ENCODE measurements at regions of chr12 and their contacts with region 1.

Region 1: DNA sequence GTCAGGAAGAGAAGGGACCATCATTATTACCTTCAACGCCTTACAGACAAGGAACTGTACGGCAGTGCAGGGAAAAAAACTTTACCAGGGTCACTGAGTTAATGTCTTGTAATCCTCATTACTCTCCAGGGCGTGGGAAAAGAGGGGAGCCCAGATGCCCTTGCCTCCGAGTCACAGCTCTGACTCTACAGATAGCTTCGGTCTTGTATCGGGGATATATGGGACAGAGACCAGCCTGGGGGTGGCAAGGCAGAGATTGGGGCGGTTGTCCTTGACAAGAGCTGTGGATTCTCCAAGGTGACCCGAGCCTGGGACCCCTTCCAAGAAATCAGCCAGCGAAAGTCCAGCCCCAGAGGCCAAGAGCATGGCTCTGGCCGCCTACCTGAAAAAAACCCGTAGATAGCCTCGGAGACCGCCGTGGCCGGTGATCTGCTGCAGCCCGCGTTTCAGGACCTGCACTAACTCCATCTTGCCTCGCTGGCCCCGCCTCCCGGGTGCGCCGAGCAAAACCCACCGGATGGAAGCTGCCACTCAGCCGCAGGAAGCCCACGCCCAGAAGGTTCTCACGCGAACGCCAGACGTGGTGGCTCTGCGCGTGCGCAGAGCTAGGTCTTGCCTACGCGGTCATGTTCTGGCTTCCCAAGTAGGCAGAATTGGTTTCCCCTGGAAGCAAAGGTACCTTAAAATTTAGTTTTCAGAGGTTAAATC is at the start of gene NDUFA12:
- DNase-seq: peak; percentile 94
- H3K4me3 ChIP-seq: peak within 1 kb of the TSS; percentile 58 to 85 (median 84)
- H3K27ac ChIP-seq: peak within 1 kb of the TSS; percentile 86
- H3K4me1 ChIP-seq: no peaks in the 10 kb centered on the region
- H3K27me3 ChIP-seq: no peaks in the 10 kb centered on the region
- CTCF ChIP-seq: no peak
- total RNA-seq, gene NDUFA12: 64.0 to 115 TPM

Region 2: DNA sequence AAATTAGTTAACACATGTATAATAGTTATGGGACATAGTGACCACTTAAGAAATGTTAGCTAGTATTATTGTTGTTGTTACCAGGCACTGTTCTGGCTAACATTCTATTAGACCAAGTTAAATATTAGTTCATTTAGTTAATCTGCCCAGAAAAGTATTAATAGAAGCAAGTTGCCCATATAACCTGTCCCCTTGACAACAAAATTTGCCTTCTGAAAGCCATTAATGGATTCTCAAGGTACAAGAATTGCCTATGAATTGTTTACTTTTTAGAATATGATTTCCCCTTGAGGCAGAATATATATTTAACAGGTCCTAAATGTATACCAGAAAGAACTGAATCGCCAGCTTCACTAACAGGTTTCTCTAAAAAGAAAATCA is 185.7 kb before region 1 on chr12:
- CTCF ChIA-PET with region 1: no interaction called
- dilution Hi-C with region 1: no loop called
- in situ Hi-C with region 1: no loop called
- intact Hi-C with region 1: no loop called
- DNase-seq: no peak
- H3K4me3 ChIP-seq: no peak overlapping the region
- H3K27ac ChIP-seq: no peak overlapping the region
- H3K4me1 ChIP-seq: no peaks in the 10 kb centered on the region
- H3K27me3 ChIP-seq: no peaks in the 10 kb centered on the region
- CTCF ChIP-seq: no peak

Region 3: DNA sequence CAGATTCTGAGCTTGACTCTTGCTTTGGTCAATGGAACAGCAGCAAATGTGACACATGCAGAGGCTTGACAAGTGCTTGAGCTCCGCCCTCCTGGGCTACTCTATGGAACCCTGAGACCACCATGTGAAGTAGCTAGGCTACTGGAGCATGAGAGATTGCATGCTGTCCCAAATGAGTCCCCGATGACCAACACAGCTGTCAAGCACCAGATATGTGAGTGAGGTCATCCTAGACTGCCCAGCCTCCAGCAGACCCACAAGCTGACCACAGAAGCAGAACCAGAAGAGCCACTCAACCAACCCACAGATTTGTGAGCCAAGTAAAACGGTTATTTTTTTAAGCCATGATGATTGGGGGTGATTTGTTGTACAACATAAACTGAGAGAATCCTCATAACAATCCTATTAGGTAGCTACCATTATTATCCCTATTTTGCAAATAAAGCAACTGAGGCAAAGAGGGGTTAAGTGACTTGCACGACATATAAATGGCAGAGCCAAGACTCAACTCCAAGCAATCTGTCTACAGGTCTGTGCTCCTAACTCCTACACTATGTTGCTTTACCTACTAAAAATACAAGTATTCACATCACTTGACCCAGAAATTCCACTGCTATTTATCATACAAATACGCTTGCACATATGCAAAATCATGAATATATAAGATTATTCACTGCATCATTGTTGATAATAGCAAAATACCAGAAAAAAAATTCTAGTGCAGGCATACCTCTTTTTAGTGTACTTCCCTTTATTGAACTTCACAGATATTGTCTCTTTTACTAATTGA is 136.1 kb before region 1 on chr12:
- CTCF ChIA-PET with region 1: no interaction called
- dilution Hi-C with region 1: no loop called
- in situ Hi-C with region 1: no loop called
- intact Hi-C with region 1: no loop called
- DNase-seq: no peak
- H3K4me3 ChIP-seq: no peak overlapping the region
- H3K27ac ChIP-seq: no peak overlapping the region
- H3K4me1 ChIP-seq: no peaks in the 10 kb centered on the region
- H3K27me3 ChIP-seq: peaks cover 3% of the 10 kb centered on the region
- CTCF ChIP-seq: no peak

Region 4: GRCh38 chr12:94941440-94941862 is 61.9 kb before region 1 on chr12:
- CTCF ChIA-PET with region 1: no interaction called
- dilution Hi-C with region 1: no loop called
- in situ Hi-C with region 1: no loop called
- intact Hi-C with region 1: loop called (anchors 5 kb)
- DNase-seq: peak; percentile 93
- H3K4me3 ChIP-seq: no peak overlapping the region
- H3K27ac ChIP-seq: peak overlapping the region; percentile 39
- H3K4me1 ChIP-seq: peaks cover 12% of the 10 kb centered on the region
- H3K27me3 ChIP-seq: no peaks in the 10 kb centered on the region
- CTCF ChIP-seq: no peak

Region 5: DNA sequence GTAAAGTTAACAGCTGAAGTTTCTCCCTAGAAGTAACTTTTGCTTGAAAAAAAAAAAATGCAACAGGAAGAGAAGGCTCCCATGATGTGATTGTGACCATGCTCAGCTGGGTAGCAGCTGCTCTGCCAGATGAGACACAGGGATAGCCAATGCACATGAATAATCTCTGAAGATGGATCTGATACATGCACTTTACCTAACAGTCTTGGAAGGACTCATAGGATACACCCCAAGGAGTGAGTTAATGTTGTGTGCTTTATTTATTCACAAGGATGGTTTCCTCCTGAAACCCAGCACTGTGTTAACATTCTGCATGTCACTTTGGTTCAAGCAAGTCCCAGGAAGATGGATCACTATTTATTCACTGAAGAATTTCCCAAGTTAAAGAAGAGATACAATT is 46.4 kb before region 1 on chr12:
- CTCF ChIA-PET with region 1: no interaction called
- dilution Hi-C with region 1: no loop called
- in situ Hi-C with region 1: no loop called
- intact Hi-C with region 1: no loop called
- DNase-seq: no peak
- H3K4me3 ChIP-seq: no peak overlapping the region
- H3K27ac ChIP-seq: no peak overlapping the region
- H3K4me1 ChIP-seq: peaks cover 21% of the 10 kb centered on the region
- H3K27me3 ChIP-seq: no peaks in the 10 kb centered on the region
- CTCF ChIP-seq: no peak

Measured in mammary epithelial cell (primary cell).